Head of caudate nucleus (tissue), 42 donors: ENCODE measurements at regions of chr4 and their contacts with region 1.

Region 1: DNA sequence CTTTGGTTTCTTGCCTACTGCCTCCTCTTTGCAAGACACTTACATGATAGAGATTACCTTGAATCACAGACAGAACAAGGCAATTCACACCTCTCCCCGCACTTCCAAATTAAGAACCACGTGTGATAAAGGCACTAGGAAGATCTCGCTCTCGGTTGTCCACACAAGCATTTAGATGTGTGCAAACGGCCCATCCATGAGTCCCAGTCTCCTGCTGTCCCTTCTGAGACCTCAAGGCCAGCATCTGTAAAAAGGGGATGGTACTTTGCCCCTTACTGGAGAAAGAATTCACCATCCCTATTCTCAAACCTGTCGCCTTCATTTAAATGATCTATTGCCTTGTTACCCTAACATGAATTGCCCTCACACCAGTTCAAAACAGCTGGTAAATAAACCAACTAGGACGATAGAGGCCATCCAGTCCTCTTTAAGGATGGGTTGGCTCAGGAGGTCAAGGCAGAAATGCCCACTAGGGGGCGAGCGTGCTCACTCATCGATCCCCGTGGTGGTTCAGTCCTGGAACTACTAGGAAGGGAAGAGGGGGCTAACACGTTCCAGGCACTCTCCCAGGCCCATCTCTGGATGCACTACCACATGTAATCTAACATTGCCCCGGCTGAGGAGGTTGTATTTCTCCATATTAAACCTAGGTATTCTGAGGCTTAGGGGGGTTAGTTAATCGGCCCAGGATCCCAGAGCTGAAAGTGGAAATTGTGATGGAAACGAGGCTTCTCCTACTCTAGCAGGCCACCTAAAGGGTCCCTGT is 95.8 kb downstream of the DHX15 start:
- DNase-seq: peak; percentile 46 to 96 (median 88)

Region 2: DNA sequence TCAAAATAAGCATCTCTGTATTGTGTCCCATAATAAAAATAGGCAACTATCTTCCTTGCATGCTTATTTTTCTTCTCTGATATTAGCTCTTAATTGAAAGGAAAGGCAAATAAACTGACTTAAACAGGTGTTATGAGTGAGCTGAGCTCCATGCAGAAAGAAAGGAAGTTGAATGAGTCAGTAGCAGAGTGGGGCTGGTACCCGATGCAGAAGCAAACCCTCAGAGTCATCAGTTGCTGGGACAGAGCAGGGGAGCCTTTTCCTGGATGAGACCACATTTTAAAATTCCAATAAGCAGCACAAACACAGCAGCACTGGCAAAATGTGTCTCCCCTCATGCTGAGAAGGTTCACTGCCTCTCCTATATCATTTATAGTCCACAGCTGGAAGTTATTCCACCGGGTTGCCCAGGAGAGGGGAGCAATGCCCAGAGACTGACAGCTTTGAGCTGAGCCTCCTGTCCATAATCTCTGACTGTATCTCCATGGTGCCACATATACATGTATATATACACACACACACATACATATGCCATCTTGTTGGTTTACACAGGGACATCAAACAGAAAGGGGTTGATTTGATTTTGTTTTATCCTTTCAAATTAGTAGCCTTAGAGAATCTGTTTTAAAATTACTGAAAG is 324.4 kb before region 1 on chr4:
- intact Hi-C with region 1: no loop called
- DNase-seq: no peak

Region 3: DNA sequence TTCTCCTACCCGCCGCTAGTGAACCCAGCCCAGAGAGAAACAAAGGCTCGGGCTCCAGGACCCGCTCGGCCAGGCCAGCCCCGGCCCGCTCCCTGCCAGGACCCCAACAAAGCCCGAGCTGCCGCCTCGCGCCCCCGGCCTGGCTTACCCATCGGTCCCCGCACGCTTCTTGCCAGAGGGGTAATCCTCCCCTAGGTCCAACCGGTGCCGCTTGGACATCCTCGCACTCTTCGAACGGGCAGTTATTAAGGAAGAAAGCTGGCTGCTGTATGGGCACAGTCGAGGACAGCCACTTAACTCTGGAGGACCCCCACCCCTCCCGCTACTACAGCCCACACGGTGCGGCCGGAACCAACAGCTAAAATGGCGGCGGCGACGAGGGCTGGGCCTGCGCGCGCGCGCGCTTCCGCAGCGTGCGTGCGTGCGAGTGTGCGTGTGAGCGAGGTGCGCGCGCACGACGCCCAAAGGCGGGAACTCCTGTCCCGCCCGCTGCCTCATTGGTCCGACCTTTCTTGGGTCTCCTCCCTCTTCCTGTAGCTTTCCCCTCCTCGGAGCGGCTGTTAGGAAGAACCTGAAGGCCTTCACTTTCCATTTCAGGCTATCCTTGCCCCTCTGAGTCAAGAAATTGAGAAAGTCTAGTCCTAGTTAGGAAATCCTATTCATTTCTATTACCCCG is 95.7 kb after region 1 on chr4 and contains the start of gene DHX15:
- intact Hi-C with region 1: no loop called
- DNase-seq: peak; percentile 91 to 98 (median 95)

Region 4: GRCh38 chr4:24690436-24690835 is 201.9 kb after region 1 on chr4:
- intact Hi-C with region 1: loop called (anchors 10 kb)
- DNase-seq: no peak

Region 5: GRCh38 chr4:25144870-25145481 is 656.4 kb after region 1 on chr4:
- intact Hi-C with region 1: loop called (anchors 10 kb)
- DNase-seq: peak in 1 of 42 donors; percentile 17